ENCODE measurements at regions of chr9 and their contacts with region 1.

Region 1: GRCh38 chr9:15510789-15511575 is at the start of gene PSIP1:
- DNase-seq: peak; percentile 69 to 86
- H3K4me3 ChIP-seq: peak within 1 kb of the TSS; percentile 87 to 97 (median 94)
- H3K27ac ChIP-seq: peak within 1 kb of the TSS; percentile 100
- H3K4me1 ChIP-seq: peaks cover 7 to 18% (median 8%) of the 10 kb centered on the region in 4 experiments; a peak in 6 of 7 replicates
- H3K27me3 ChIP-seq: no peaks in the 10 kb centered on the region
- CTCF ChIP-seq: 0 out of 4 replicates have a peak, but pooled peaks of 1 of the 3 experiments have one; percentile 1
- EP300 ChIP-seq: peak in 1 of 2 experiments; percentile 98; a peak in 2 of 3 replicates
- POLR2A ChIP-seq: peak; percentile 79 to 81
- RAD21 ChIP-seq: no peak
- total RNA-seq, gene PSIP1: 368 and 387 TPM in 2 replicates

Region 2: DNA sequence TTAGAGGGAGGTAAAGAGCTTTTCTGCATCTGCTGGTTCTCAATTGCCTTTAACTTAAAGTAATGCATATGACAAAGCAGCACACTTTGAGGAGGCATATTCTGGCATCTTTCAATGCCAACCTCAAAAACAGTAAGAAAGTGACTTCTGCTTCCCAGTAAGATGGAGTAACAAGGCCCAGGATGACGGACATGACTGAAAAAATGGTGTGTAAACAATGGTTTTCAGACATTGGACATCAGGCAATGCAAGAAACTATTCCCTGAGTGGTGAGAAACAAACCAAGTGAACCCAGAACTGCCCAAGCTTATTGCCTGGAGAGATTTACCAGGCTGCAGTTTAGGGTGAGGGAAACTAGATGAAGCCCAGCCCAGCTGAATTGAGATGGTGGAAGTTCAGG is 164.1 kb before region 1 on chr9:
- CTCF ChIA-PET with region 1: no interaction called
- POLR2A ChIA-PET with region 1: no interaction called
- DNase-seq: no peak
- H3K4me3 ChIP-seq: no peak overlapping the region
- H3K27ac ChIP-seq: no peak overlapping the region
- H3K4me1 ChIP-seq: peaks cover 0 to 4% (median 1%) of the 10 kb centered on the region in 4 experiments; a peak in 1 of 7 replicates
- H3K27me3 ChIP-seq: no peaks in the 10 kb centered on the region
- CTCF ChIP-seq: no peak
- EP300 ChIP-seq: no peak
- POLR2A ChIP-seq: no peak
- RAD21 ChIP-seq: no peak

Region 3: GRCh38 chr9:15475923-15476536 is 35.0 kb before region 1 on chr9:
- CTCF ChIA-PET with region 1: interaction called, 3 read pairs
- POLR2A ChIA-PET with region 1: interaction called, 19 read pairs
- DNase-seq: no peak
- H3K4me3 ChIP-seq: no peak overlapping the region
- H3K27ac ChIP-seq: no peak overlapping the region
- H3K4me1 ChIP-seq: no peaks in the 10 kb centered on the region
- H3K27me3 ChIP-seq: no peaks in the 10 kb centered on the region
- CTCF ChIP-seq: no peak
- EP300 ChIP-seq: no peak
- POLR2A ChIP-seq: peak in 1 of 2 experiments; percentile 29; a peak in 1 of 3 replicates
- RAD21 ChIP-seq: no peak

Region 4: GRCh38 chr9:15485836-15486666 is 24.9 kb before region 1 on chr9:
- CTCF ChIA-PET with region 1: interaction called, 4 read pairs
- POLR2A ChIA-PET with region 1: interaction called, 19 read pairs
- DNase-seq: no peak
- H3K4me3 ChIP-seq: no peak overlapping the region
- H3K27ac ChIP-seq: no peak overlapping the region
- H3K4me1 ChIP-seq: peaks cover 0 to 2% (median 0%) of the 10 kb centered on the region in 4 experiments; a peak in 1 of 7 replicates
- H3K27me3 ChIP-seq: no peaks in the 10 kb centered on the region
- CTCF ChIP-seq: peak in 1 of 3 experiments; percentile 29; a peak in 1 of 4 replicates
- EP300 ChIP-seq: no peak
- POLR2A ChIP-seq: no peak
- RAD21 ChIP-seq: 0 out of 4 replicates have a peak, but pooled peaks of 1 of the 2 experiments have one; percentile 4

Region 5: GRCh38 chr9:15522130-15522755 is 11.3 kb after region 1 on chr9:
- CTCF ChIA-PET with region 1: interaction called, 4 read pairs
- POLR2A ChIA-PET with region 1: interaction called, 10 read pairs
- DNase-seq: no peak
- H3K4me3 ChIP-seq: no peak overlapping the region
- H3K27ac ChIP-seq: no peak overlapping the region
- H3K4me1 ChIP-seq: no peaks in the 10 kb centered on the region; a peak in 1 of 7 replicates
- H3K27me3 ChIP-seq: no peaks in the 10 kb centered on the region
- CTCF ChIP-seq: no peak
- EP300 ChIP-seq: no peak
- POLR2A ChIP-seq: no peak
- RAD21 ChIP-seq: no peak

Region 6: GRCh38 chr9:15529566-15530324 is 18.8 kb after region 1 on chr9:
- CTCF ChIA-PET with region 1: interaction called, 33 read pairs
- POLR2A ChIA-PET with region 1: interaction called, 51 read pairs
- DNase-seq: no peak
- H3K4me3 ChIP-seq: no peak overlapping the region
- H3K27ac ChIP-seq: no peak overlapping the region
- H3K4me1 ChIP-seq: peaks cover 0 to 2% (median 0%) of the 10 kb centered on the region in 4 experiments; a peak in 1 of 7 replicates
- H3K27me3 ChIP-seq: no peaks in the 10 kb centered on the region
- CTCF ChIP-seq: no peak
- EP300 ChIP-seq: no peak
- POLR2A ChIP-seq: no peak
- RAD21 ChIP-seq: no peak

Region 7: DNA sequence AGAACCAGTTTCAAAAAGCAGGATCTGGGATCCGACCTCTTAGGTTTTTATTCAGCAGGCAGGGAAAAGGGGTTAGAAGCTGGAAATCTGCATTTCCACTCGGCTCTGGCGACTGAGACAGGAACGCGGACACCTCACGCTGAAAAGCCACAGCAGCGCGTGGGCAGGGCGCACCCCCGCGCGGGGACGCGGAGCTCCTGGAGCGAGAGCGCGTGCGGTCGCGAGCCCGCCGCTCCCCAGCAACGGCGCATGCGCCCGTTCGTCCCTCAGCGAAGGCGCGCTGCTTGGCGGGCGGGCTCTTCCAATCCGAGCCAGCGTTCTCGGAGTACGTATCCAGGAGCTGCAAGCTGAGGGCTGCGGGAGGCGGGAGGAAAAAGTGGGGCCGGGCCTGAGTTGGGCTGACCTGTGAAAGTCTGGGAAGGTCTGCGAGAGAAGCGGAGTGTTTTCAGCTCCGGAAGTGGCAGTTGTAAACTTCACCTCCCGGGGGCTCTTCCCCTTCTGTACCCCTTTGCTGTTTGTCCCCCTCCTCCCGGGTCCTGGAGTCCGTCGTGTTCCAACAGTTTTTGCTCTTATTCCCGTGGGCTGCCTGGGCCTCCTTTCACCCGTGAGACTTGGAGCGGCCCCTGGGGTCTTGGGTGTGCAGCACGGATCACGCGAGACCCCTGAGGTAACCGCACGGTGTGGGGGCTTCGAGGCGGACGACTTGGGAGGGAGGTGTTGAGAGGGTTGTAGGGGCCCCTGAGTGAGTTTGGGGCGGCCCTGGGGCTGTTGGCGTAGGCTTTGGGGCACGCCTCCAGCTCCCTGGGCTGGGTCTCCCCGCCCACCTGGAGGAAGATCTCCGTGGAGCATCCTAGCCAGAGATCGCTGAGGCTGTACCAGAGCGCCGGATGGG is 41.9 kb after region 1 on chr9 and contains the start of gene CCDC171:
- CTCF ChIA-PET with region 1: interaction called, 6 read pairs
- POLR2A ChIA-PET with region 1: interaction called, 37 read pairs
- DNase-seq: peak; percentile 88
- H3K4me3 ChIP-seq: peak within 1 kb of the TSS; percentile 80 to 92 (median 81)
- H3K27ac ChIP-seq: peak within 1 kb of the TSS; percentile 81
- H3K4me1 ChIP-seq: peaks cover 0 to 2% (median 1%) of the 10 kb centered on the region in 4 experiments; a peak in 1 of 7 replicates
- H3K27me3 ChIP-seq: no peaks in the 10 kb centered on the region
- CTCF ChIP-seq: no peak
- EP300 ChIP-seq: no peak
- POLR2A ChIP-seq: peak; percentile 66 to 82
- RAD21 ChIP-seq: no peak
- total RNA-seq, gene CCDC171: 1.9 and 2.3 TPM in 2 replicates

Region 8: DNA sequence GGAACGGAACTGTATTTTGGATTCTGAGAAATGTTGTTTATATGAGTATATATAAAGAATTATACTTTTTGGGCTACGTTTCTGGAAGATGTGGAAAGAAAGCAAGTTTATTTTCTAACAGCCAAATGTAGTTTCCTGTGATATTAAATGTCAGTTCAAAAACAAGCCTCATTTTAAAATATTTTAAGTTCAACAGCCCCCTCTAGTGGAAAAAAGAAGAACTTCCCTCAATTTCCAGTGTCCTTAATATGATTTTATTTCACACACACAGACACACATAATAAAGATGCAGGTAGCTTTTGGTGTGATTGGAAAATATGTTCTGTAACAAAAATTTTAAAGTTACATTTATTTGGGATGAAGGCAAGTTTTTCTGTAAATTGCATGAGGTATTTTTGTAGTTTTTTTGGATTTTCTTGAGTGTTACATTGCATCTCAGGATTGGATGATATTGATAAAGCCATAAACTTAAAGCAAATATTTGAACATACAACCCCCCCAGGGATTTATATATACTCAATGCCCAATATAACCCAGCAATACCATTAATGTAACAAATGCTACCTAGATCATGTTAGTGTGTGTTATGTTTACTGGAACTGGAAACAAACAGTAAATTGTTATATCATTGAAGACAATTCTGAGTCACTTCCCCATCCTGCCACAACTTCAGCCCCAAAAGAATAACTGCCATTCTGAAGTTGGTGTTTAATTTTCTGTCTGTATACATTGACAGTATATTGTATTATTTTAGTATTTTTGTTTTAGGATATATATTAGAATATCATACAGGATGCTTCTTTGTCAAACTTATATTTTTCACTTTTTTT is 95.9 kb after region 1 on chr9:
- CTCF ChIA-PET with region 1: interaction called, 9 read pairs
- POLR2A ChIA-PET with region 1: interaction called, 12 read pairs
- DNase-seq: no peak
- H3K4me3 ChIP-seq: no peak overlapping the region
- H3K27ac ChIP-seq: no peak overlapping the region
- H3K4me1 ChIP-seq: no peaks in the 10 kb centered on the region
- H3K27me3 ChIP-seq: no peaks in the 10 kb centered on the region
- CTCF ChIP-seq: peak in 2 of 3 experiments; percentile 27 to 32; a peak in 2 of 4 replicates
- EP300 ChIP-seq: no peak
- POLR2A ChIP-seq: no peak
- RAD21 ChIP-seq: peak in 1 of 2 experiments; percentile 60